PC-3 (cell line): ENCODE measurements at regions of chr4 and their contacts with region 1.

Region 1: DNA sequence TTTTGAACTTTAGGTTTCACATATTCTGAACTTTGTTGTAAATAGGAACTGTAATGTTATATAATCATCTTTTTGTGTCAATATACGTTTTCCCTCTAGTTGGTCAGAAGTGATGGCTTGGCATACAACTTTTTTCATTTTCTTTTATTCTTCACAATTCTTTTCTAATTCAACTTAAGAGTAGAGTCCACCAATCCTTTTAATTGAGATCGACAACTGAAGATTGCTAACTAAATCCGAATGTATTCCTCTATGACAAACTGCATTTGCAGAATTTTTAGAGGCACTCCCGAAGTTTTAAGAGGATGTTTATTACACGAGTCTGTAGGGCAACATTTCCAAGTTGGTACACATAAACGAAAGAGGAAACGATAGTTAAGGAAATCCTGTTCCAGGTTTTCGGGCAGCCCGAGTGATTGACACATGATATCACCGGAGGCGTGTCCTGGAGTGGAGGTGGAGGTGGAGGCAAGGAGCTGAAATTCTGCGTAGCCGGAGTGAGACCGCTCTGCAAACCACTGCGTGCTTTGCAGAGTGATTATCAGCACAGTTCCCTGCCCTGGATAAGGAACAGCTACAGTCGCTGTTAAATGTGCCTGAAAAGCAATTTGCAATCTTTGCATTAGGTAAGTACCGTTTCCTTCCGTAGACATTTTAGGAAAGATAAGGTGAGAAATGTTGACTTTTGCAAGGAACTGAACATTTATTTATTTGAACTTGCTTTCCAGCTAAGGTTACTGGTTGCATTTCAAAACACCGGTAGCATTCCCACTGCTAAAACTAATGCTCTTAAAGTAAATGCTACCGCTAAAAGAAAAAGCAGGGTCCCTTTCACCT is at the start of gene SPRY1:
- DNase-seq: peak; percentile 92
- ATAC-seq: peak; percentile 73
- H3K4me3 ChIP-seq: peak within 1 kb of the TSS; percentile 83
- H3K27ac ChIP-seq: peak within 1 kb of the TSS; percentile 72
- H3K4me1 ChIP-seq: peaks cover 4% of the 10 kb centered on the region; the same call in 1 of the 2 replicates
- H3K27me3 ChIP-seq: no peaks in the 10 kb centered on the region
- CTCF ChIP-seq: no peak
- total RNA-seq, gene SPRY1: 26.4 and 30.6 TPM in 2 replicates

Region 2: GRCh38 chr4:123102897-123103471 is 293.5 kb before region 1 on chr4:
- CTCF ChIA-PET with region 1: no interaction called
- POLR2A ChIA-PET with region 1: no interaction called
- intact Hi-C with region 1: loop called (anchors 5 kb)
- DNase-seq: peak; percentile 54
- ATAC-seq: peak; percentile 54; the same call in 1 of the 2 replicates
- H3K4me3 ChIP-seq: no peak overlapping the region
- H3K27ac ChIP-seq: no peak overlapping the region
- H3K4me1 ChIP-seq: no peaks in the 10 kb centered on the region
- H3K27me3 ChIP-seq: no peaks in the 10 kb centered on the region
- CTCF ChIP-seq: peak; percentile 82

Region 3: GRCh38 chr4:123127218-123127617 is 269.3 kb before region 1 on chr4:
- CTCF ChIA-PET with region 1: no interaction called
- POLR2A ChIA-PET with region 1: no interaction called
- intact Hi-C with region 1: loop called (anchors 2 kb)
- DNase-seq: peak; percentile 37
- ATAC-seq: no peak
- H3K4me3 ChIP-seq: no peak overlapping the region
- H3K27ac ChIP-seq: no peak overlapping the region
- H3K4me1 ChIP-seq: peaks cover 7% of the 10 kb centered on the region
- H3K27me3 ChIP-seq: no peaks in the 10 kb centered on the region
- CTCF ChIP-seq: peak; percentile 54

Region 4: GRCh38 chr4:123418351-123418931 is 21.9 kb after region 1 on chr4:
- CTCF ChIA-PET with region 1: no interaction called
- POLR2A ChIA-PET with region 1: no interaction called
- intact Hi-C with region 1: loop called (anchors 2 kb)
- DNase-seq: peak; percentile 88
- ATAC-seq: peak; percentile 83
- H3K4me3 ChIP-seq: peak overlapping the region; percentile 33; the same call in 1 of the 2 replicates
- H3K27ac ChIP-seq: peak overlapping the region; percentile 95
- H3K4me1 ChIP-seq: peaks cover 68% of the 10 kb centered on the region
- H3K27me3 ChIP-seq: no peaks in the 10 kb centered on the region
- CTCF ChIP-seq: no peak

Region 5: GRCh38 chr4:123452616-123453015 is 56.1 kb after region 1 on chr4:
- CTCF ChIA-PET with region 1: interaction called, 3 read pairs
- POLR2A ChIA-PET with region 1: interaction called, 5 read pairs
- intact Hi-C with region 1: loop called (anchors 2 kb)
- DNase-seq: peak; percentile 90
- ATAC-seq: peak; percentile 30
- H3K4me3 ChIP-seq: no peak overlapping the region
- H3K27ac ChIP-seq: peak overlapping the region; percentile 46
- H3K4me1 ChIP-seq: peaks cover 36% of the 10 kb centered on the region
- H3K27me3 ChIP-seq: no peaks in the 10 kb centered on the region
- CTCF ChIP-seq: no peak

Region 6: DNA sequence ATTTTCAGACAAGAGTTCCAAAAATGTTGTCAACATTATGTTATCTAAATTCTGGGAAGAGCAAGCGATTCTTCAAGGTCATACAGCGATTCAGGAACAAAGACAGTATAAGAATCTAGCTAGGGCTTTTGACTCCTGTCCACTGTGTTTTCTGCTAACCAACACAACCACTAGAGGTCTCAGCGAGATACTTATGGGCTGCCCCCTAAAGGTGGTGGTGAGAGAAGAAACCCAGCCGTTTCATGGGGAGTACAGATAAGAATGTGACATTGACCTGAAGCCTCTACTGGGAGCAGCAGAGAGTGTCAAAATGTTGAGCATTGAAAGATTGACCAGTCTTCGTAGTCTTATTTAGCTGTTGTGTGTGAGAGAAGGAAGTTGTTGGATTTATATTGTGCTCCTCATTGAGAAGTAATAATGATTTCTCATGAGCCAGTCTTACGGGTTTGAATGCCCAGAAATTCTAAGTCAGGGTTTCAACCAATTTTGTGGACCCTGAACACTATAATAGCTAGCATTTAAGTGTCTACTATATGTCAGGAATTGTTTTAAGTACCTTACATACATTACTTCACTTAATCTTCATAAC is 168.3 kb after region 1 on chr4:
- CTCF ChIA-PET with region 1: no interaction called
- POLR2A ChIA-PET with region 1: no interaction called
- intact Hi-C with region 1: loop called (anchors 2 kb)
- DNase-seq: peak; percentile 78
- ATAC-seq: peak; percentile 80
- H3K4me3 ChIP-seq: no peak overlapping the region
- H3K27ac ChIP-seq: no peak overlapping the region
- H3K4me1 ChIP-seq: peaks cover 27% of the 10 kb centered on the region
- H3K27me3 ChIP-seq: no peaks in the 10 kb centered on the region
- CTCF ChIP-seq: peak; percentile 96

Region 7: GRCh38 chr4:123588631-123589241 is 192.2 kb after region 1 on chr4:
- CTCF ChIA-PET with region 1: no interaction called
- POLR2A ChIA-PET with region 1: no interaction called
- intact Hi-C with region 1: loop called (anchors 1 kb)
- DNase-seq: peak; percentile 78
- ATAC-seq: peak; percentile 61
- H3K4me3 ChIP-seq: peak overlapping the region; percentile 45; the same call in 1 of the 2 replicates
- H3K27ac ChIP-seq: peak overlapping the region; percentile 98
- H3K4me1 ChIP-seq: peaks cover 26% of the 10 kb centered on the region
- H3K27me3 ChIP-seq: no peaks in the 10 kb centered on the region
- CTCF ChIP-seq: no peak

Region 8: GRCh38 chr4:124386648-124387047 is 990.1 kb after region 1 on chr4:
- CTCF ChIA-PET with region 1: no interaction called
- POLR2A ChIA-PET with region 1: no interaction called
- intact Hi-C with region 1: no loop called
- DNase-seq: no peak
- ATAC-seq: no peak
- H3K4me3 ChIP-seq: no peak overlapping the region
- H3K27ac ChIP-seq: no peak overlapping the region
- H3K4me1 ChIP-seq: peaks cover 6% of the 10 kb centered on the region; the same call in 1 of the 2 replicates
- H3K27me3 ChIP-seq: no peaks in the 10 kb centered on the region
- CTCF ChIP-seq: no peak